Activated B cell treated with CpG ODN at 0.5 μM for 24 hours (primary cell): ENCODE measurements at regions of chr1 and their contacts with region 1.

Region 1: DNA sequence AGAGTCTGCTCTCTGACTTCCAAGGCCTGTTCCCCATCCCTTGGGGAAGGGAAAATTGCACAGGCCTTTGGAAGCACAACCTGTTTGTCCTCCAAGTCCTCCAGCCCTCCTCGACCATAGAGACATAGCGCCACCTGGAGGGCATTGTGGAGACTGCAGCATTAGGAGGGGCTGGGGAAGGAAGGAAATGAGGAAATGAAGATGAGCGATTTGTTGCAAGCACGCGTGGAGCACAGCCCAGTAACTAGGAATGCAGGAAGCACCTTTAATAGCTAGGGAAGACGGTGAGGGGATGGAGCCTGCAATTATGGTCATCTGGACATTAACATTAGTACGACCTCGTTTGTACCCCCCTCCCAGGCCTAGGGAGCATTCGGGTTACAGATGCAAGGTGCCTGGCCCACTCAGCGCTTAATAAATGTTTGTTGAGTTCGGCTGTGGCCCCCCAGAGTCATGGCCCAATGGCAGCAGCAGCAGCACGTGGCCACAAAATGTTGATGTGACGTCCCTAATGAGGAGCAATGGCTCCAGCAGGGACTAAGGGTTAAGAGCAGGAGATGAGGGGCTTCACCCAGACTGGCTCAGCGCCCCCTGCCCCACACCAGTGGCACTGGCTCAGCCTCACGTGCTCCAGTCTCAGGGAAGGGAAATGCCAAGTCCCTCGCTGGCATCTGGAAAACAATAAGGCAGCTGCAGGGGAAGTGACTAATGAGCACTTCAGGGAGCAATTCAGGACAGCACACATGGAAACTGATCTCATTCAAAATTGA is 8.0 kb upstream of the CAMK2N1 start:
- DNase-seq: peak; percentile 79
- ATAC-seq: peak; percentile 96
- H3K4me3 Mint-ChIP-seq: no peak overlapping the region
- H3K27ac Mint-ChIP-seq: no peak overlapping the region
- H3K4me1 Mint-ChIP-seq: peaks cover 4% of the 10 kb centered on the region
- H3K27me3 Mint-ChIP-seq: peaks cover 4% of the 10 kb centered on the region
- CTCF ChIP-seq: peak; percentile 95

Region 2: DNA sequence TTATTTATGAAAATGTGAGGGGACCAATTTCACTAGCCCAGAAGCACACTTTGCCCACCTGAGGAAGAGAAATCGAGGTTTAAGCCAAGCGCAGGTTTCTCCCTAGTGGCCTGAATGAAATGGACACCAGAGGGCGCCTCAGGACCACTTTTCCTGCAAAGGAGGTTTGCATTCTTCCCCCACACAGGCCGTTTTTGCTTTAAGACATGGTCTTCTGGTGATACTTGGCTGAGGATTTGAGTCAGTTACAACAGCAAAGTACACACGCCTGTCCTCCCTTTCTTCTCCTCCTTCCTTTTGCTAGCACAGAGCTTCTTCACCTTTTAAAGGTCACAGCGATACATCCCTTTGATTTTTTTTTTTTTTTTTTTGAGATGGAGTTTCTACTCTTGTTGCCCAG is 576.0 kb before region 1 on chr1:
- CTCF ChIA-PET with region 1: interaction called, 3 read pairs
- POLR2A ChIA-PET with region 1: no interaction called
- intact Hi-C with region 1: loop called (anchors 1 kb)
- DNase-seq: peak; percentile 57
- ATAC-seq: peak; percentile 74
- H3K4me3 Mint-ChIP-seq: no peak overlapping the region
- H3K27ac Mint-ChIP-seq: no peak overlapping the region
- H3K4me1 Mint-ChIP-seq: peaks cover 2% of the 10 kb centered on the region
- H3K27me3 Mint-ChIP-seq: peaks cover 5% of the 10 kb centered on the region
- CTCF ChIP-seq: peak; percentile 86

Region 3: GRCh38 chr1:20100632-20101355 is 393.2 kb before region 1 on chr1:
- CTCF ChIA-PET with region 1: no interaction called
- POLR2A ChIA-PET with region 1: no interaction called
- intact Hi-C with region 1: loop called (anchors 5 kb)
- DNase-seq: peak; percentile 29
- ATAC-seq: peak; percentile 92
- H3K4me3 Mint-ChIP-seq: no peak overlapping the region
- H3K27ac Mint-ChIP-seq: no peak overlapping the region
- H3K4me1 Mint-ChIP-seq: peaks cover 6% of the 10 kb centered on the region
- H3K27me3 Mint-ChIP-seq: no peaks in the 10 kb centered on the region
- CTCF ChIP-seq: no peak

Region 4: DNA sequence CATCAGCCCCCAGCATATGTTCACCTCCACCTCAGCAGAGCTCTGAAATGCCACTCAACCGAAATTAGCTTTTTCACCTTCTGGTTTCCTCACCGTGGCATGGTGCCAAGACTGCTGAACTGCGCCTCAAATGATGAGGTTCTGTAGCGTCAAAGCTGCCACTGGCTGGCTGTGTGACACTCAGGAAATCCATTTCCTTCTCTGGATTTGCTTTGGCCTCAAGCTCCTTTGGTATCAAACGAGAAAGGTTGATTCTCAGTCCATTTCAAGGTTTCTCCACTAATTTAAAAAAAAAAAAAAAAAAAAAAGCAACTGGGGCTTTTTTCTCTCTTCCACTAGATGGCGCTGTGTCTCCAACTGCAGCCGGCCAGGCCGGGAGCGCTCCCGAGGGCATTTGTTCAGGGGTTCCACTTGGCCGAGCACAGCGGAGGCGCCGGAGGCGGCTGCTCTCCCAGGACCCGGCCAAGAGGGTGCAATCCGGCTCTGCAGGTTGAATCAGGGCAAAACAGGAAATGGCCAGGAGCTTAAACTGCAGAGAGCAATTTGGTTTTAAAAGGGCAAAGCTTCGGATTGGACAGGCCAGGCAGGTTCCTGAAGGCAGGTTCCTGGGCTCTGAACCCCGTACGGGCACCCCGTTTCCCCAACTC is 281.2 kb before region 1 on chr1:
- CTCF ChIA-PET with region 1: interaction called, 56 read pairs
- POLR2A ChIA-PET with region 1: no interaction called
- intact Hi-C with region 1: loop called (anchors 1 kb)
- DNase-seq: peak; percentile 58
- ATAC-seq: peak; percentile 91
- H3K4me3 Mint-ChIP-seq: peak overlapping the region; percentile 7
- H3K27ac Mint-ChIP-seq: no peak overlapping the region
- H3K4me1 Mint-ChIP-seq: peaks cover 14% of the 10 kb centered on the region
- H3K27me3 Mint-ChIP-seq: peaks cover 23% of the 10 kb centered on the region
- CTCF ChIP-seq: peak; percentile 61

Region 5: GRCh38 chr1:20361806-20362640 is 132.0 kb before region 1 on chr1:
- CTCF ChIA-PET with region 1: interaction called, 5 read pairs
- POLR2A ChIA-PET with region 1: no interaction called
- intact Hi-C with region 1: loop called (anchors 1 kb)
- DNase-seq: no peak
- ATAC-seq: no peak
- H3K4me3 Mint-ChIP-seq: no peak overlapping the region
- H3K27ac Mint-ChIP-seq: no peak overlapping the region
- H3K4me1 Mint-ChIP-seq: peaks cover 4% of the 10 kb centered on the region
- H3K27me3 Mint-ChIP-seq: peaks cover 56% of the 10 kb centered on the region
- CTCF ChIP-seq: no peak